CD4-positive, alpha-beta T cell (primary cell): ENCODE measurements at regions of chr17 and their contacts with region 1.

Region 1: DNA sequence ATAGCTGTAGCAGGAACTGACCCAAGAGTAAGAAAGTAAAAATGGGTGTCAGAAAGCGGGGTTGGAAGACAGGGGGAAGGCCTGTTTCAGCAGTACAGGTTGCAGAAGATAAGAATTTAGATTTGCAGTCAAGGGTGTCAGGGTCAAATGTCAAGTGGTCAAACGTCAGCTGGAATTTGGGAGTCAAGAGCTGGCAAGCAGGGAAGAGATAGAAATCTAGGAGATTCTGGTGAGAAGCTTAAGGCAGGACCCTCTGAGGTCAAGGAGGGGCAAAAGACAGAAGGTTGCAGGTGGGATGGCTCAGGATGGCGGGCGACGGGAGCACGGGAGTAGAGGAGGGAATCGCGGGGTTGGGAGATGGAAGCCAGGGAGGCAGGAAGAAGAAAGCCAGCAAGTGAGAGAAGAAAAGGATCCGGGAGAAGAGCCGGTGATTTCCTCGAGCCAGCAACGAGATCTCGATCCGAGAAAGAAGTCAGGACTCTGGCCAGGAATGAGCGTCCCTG is 335 bp downstream of the SLC25A35 start:
- DNase-seq: no peak
- ATAC-seq: no peak
- H3K4me3 ChIP-seq: peak overlapping the region; percentile 72
- H3K4me3 Mint-ChIP-seq: peak overlapping the region; percentile 95
- H3K27ac ChIP-seq: peak overlapping the region; percentile 48 to 73
- H3K27ac Mint-ChIP-seq: peak overlapping the region; percentile 79
- H3K4me1 ChIP-seq: peaks cover 26% of the 10 kb centered on the region
- H3K4me1 Mint-ChIP-seq: peaks cover 39% of the 10 kb centered on the region
- H3K27me3 ChIP-seq: no peaks in the 10 kb centered on the region
- H3K27me3 Mint-ChIP-seq: no peaks in the 10 kb centered on the region
- CTCF ChIP-seq: no peak

Region 2: DNA sequence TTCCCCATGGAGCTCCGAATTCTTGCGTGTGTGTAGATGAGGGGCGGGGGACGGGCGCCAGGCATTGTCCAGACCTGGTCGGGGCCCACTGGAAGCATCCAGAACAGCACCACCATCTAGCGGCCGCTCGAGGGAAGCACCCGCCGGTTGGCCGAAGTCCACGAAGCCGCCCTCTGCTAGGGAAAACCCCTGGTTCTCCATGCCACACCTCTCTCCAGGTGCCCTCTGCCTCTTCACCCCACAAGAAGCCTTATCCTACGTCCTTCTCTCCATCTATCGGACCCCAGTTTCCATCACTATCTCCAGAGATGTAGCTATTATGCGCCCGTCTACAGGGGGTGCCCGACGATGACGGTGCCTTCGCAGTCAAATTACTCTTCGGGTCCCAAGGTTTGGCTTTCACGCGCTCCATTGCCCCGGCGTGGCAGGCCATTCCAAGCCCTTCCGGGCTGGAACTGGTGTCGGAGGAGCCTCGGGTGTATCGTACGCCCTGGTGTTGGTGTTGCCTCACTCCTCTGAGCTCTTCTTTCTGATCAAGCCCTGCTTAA is 733.8 kb before region 1 on chr17:
- CTCF ChIA-PET with region 1: no interaction called
- POLR2A ChIA-PET with region 1: no interaction called
- intact Hi-C with region 1: no loop called
- DNase-seq: peak; percentile 62 to 89 (median 77)
- ATAC-seq: peak; percentile 62
- H3K4me3 ChIP-seq: peak overlapping the region; percentile 91
- H3K4me3 Mint-ChIP-seq: peak overlapping the region; percentile 95
- H3K27ac ChIP-seq: peak overlapping the region; percentile 88 to 96
- H3K27ac Mint-ChIP-seq: peak overlapping the region; percentile 93
- H3K4me1 ChIP-seq: peaks cover 66% of the 10 kb centered on the region
- H3K4me1 Mint-ChIP-seq: peaks cover 40% of the 10 kb centered on the region
- H3K27me3 ChIP-seq: no peaks in the 10 kb centered on the region
- H3K27me3 Mint-ChIP-seq: no peaks in the 10 kb centered on the region
- CTCF ChIP-seq: peak; percentile 89

Region 3: DNA sequence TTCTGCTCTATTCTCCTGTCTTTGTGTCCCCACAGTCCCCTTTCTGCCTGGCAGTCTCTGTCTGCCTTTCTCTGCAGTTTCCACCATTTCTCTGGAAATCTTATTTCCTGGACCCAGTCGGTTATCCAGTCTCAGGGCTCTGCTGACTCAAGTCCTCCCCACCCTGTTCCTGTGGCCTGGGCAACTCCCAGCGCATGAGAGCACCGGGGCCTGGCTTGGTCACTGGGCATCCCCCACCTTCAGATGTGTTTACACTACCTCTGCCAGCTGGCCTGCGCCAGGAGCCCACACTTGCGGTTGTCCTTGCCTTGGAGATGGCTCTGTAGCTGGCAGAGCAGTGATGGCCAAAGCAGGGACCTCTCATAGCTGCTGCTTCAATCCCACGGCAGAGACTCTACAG is 275.2 kb before region 1 on chr17:
- CTCF ChIA-PET with region 1: no interaction called
- POLR2A ChIA-PET with region 1: no interaction called
- intact Hi-C with region 1: no loop called
- DNase-seq: peak in 3 of 14 experiments; percentile 24 to 71 (median 55)
- ATAC-seq: no peak
- H3K4me3 ChIP-seq: no peak overlapping the region
- H3K4me3 Mint-ChIP-seq: no peak overlapping the region
- H3K27ac ChIP-seq: no peak overlapping the region
- H3K27ac Mint-ChIP-seq: no peak overlapping the region
- H3K4me1 ChIP-seq: peaks cover 16% of the 10 kb centered on the region
- H3K4me1 Mint-ChIP-seq: peaks cover 6% of the 10 kb centered on the region
- H3K27me3 ChIP-seq: peaks cover 4 to 13% of the 10 kb centered on the region in 2 experiments
- H3K27me3 Mint-ChIP-seq: peaks cover 32% of the 10 kb centered on the region
- CTCF ChIP-seq: no peak

Region 4: DNA sequence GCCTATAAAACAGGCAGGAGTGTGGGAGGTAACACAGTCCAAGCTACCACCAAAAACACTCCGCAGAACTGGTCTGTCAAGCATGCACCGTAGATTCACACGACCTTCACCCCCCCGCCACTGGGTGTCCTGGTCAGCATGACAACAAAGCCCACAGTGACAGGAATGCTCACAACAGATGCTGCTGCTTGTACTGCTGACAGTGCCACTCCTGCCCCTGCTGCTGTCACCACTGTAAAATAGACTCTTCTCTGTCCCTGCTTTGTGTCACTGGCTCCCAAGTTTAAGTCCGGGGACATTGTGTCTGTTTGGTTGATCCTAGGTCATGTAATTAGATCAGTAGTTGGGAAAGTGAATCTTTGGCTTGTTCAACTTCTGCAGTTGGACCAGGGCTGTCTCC is 37.8 kb after region 1 on chr17:
- CTCF ChIA-PET with region 1: no interaction called
- POLR2A ChIA-PET with region 1: no interaction called
- intact Hi-C with region 1: no loop called
- DNase-seq: no peak
- ATAC-seq: no peak
- H3K4me3 ChIP-seq: no peak overlapping the region
- H3K4me3 Mint-ChIP-seq: no peak overlapping the region
- H3K27ac ChIP-seq: no peak overlapping the region
- H3K27ac Mint-ChIP-seq: no peak overlapping the region
- H3K4me1 ChIP-seq: no peaks in the 10 kb centered on the region
- H3K4me1 Mint-ChIP-seq: peaks cover under 1% of the 10 kb centered on the region
- H3K27me3 ChIP-seq: peaks cover 8 to 12% of the 10 kb centered on the region in 2 experiments
- H3K27me3 Mint-ChIP-seq: peaks cover 39% of the 10 kb centered on the region
- CTCF ChIP-seq: no peak

Region 5: GRCh38 chr17:8376271-8377067 is 81.6 kb after region 1 on chr17 and contains the start of gene KRABD2:
- CTCF ChIA-PET with region 1: no interaction called
- POLR2A ChIA-PET with region 1: no interaction called
- intact Hi-C with region 1: loop called in 1 of 2 experiments (anchors 5 kb)
- DNase-seq: peak; percentile 82 to 93 (median 87)
- ATAC-seq: peak; percentile 99
- H3K4me3 ChIP-seq: peak within 1 kb of the TSS; percentile 98
- H3K4me3 Mint-ChIP-seq: peak within 1 kb of the TSS; percentile 86
- H3K27ac ChIP-seq: peak within 1 kb of the TSS; percentile 55 to 75
- H3K27ac Mint-ChIP-seq: peak within 1 kb of the TSS; percentile 86
- H3K4me1 ChIP-seq: peaks cover 43% of the 10 kb centered on the region
- H3K4me1 Mint-ChIP-seq: peaks cover 53% of the 10 kb centered on the region
- H3K27me3 ChIP-seq: no peaks in the 10 kb centered on the region
- H3K27me3 Mint-ChIP-seq: no peaks in the 10 kb centered on the region
- CTCF ChIP-seq: peak; percentile 65